Caco-2 (cell line): ENCODE measurements at regions of chr3 and their contacts with region 1.

Region 1: DNA sequence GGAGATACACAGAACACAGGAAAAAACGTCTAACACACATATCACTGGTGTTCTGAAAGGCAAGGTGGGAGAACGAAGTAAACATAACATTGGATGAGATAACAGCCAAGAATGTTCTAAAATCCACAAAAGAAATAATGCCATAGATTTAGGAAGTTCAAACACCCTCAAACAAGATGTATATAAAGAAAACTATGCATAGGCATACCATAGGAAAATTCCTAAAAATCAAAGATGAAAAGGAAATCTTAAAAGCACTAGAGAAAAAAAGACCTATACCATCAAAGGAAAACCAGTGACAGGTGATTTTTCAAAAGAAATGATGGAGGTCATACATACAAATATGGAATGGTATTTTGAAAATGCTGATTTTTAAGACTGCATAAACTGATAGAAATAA is 57.3 kb downstream of the GLB1 start:
- DNase-seq: no peak
- H3K4me3 ChIP-seq: no peak overlapping the region
- H3K4me3 Mint-ChIP-seq: no peak overlapping the region
- H3K27ac Mint-ChIP-seq: peak overlapping the region; percentile 17
- H3K4me1 ChIP-seq: peaks cover 49% of the 10 kb centered on the region
- H3K4me1 Mint-ChIP-seq: peaks cover 55% of the 10 kb centered on the region
- H3K27me3 ChIP-seq: no peaks in the 10 kb centered on the region
- H3K27me3 Mint-ChIP-seq: no peaks in the 10 kb centered on the region
- CTCF ChIP-seq: no peak

Region 2: GRCh38 chr3:32865405-32865804 is 174.2 kb before region 1 on chr3:
- CTCF ChIA-PET with region 1: no interaction called
- POLR2A ChIA-PET with region 1: no interaction called
- intact Hi-C with region 1: no loop called
- DNase-seq: peak in 1 of 2 experiments; percentile 30
- H3K4me3 ChIP-seq: no peak overlapping the region
- H3K4me3 Mint-ChIP-seq: peak overlapping the region; percentile 18
- H3K27ac Mint-ChIP-seq: peak overlapping the region; percentile 77
- H3K4me1 ChIP-seq: peaks cover 57% of the 10 kb centered on the region
- H3K4me1 Mint-ChIP-seq: peaks cover 44% of the 10 kb centered on the region
- H3K27me3 ChIP-seq: no peaks in the 10 kb centered on the region
- H3K27me3 Mint-ChIP-seq: no peaks in the 10 kb centered on the region
- CTCF ChIP-seq: no peak

Region 3: GRCh38 chr3:33016851-33017405 is 22.7 kb before region 1 on chr3:
- CTCF ChIA-PET with region 1: no interaction called
- POLR2A ChIA-PET with region 1: no interaction called
- intact Hi-C with region 1: no loop called
- DNase-seq: no peak
- H3K4me3 ChIP-seq: no peak overlapping the region
- H3K4me3 Mint-ChIP-seq: no peak overlapping the region
- H3K27ac Mint-ChIP-seq: no peak overlapping the region
- H3K4me1 ChIP-seq: no peaks in the 10 kb centered on the region
- H3K4me1 Mint-ChIP-seq: peaks cover 7% of the 10 kb centered on the region
- H3K27me3 ChIP-seq: no peaks in the 10 kb centered on the region
- H3K27me3 Mint-ChIP-seq: no peaks in the 10 kb centered on the region
- CTCF ChIP-seq: no peak

Region 4: GRCh38 chr3:33057320-33058298 is 18.0 kb after region 1 on chr3:
- CTCF ChIA-PET with region 1: no interaction called
- POLR2A ChIA-PET with region 1: interaction called, 6 read pairs
- intact Hi-C with region 1: loop called (anchors 2 kb)
- DNase-seq: peak; percentile 71 to 73
- H3K4me3 ChIP-seq: 0 out of 2 replicates have a peak overlapping the region, but pooled peaks have one; percentile 5
- H3K4me3 Mint-ChIP-seq: peak overlapping the region; percentile 12
- H3K27ac Mint-ChIP-seq: peak overlapping the region; percentile 30
- H3K4me1 ChIP-seq: peaks cover 52% of the 10 kb centered on the region
- H3K4me1 Mint-ChIP-seq: peaks cover 41% of the 10 kb centered on the region
- H3K27me3 ChIP-seq: no peaks in the 10 kb centered on the region
- H3K27me3 Mint-ChIP-seq: no peaks in the 10 kb centered on the region
- CTCF ChIP-seq: no peak